Ovary (tissue), 10 donors: ENCODE measurements at regions of chr19 and their contacts with region 1.

Region 1: GRCh38 chr19:39502640-39503417 is 4.1 kb downstream of the DLL3 start:
- DNase-seq: peak; percentile 18 to 67 (median 55)
- H3K4me3 ChIP-seq: no peak overlapping the region
- H3K27ac ChIP-seq: no peak overlapping the region
- H3K4me1 ChIP-seq: peaks cover 9% of the 10 kb centered on the region
- H3K27me3 ChIP-seq: peaks cover under 1% of the 10 kb centered on the region
- CTCF ChIP-seq: peak; percentile 38 to 66 (median 63)
- EP300 ChIP-seq: no peak
- POLR2A ChIP-seq: no peak

Region 2: DNA sequence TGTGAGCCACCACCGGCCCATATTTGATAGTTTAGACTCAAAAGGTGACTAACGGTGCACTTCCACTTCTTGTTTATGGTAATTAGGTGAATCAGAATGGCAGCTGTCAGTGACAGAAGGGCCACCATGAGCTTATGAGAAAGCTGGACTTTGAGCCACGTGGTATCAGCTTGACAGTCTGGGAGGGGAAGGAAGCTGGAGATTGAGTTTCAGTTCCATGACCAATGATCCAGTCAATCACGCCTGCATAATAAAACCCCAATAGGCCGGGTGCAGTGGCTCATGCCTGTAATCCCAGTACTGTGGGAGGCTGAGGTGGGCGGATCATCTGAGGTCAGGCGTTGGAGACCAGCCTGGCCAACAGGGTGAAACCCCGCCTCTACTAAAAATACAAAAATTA is 21.7 kb after region 1 on chr19:
- intact Hi-C with region 1: loop called in 1 of 4 experiments (anchors 2 kb)
- DNase-seq: no peak
- H3K4me3 ChIP-seq: no peak overlapping the region
- H3K27ac ChIP-seq: no peak overlapping the region
- H3K4me1 ChIP-seq: no peaks in the 10 kb centered on the region
- H3K27me3 ChIP-seq: no peaks in the 10 kb centered on the region
- CTCF ChIP-seq: no peak
- EP300 ChIP-seq: no peak
- POLR2A ChIP-seq: no peak